Thyroid gland (tissue), 4 donors: ENCODE measurements at regions of chr18 and their contacts with region 1.

Region 1: DNA sequence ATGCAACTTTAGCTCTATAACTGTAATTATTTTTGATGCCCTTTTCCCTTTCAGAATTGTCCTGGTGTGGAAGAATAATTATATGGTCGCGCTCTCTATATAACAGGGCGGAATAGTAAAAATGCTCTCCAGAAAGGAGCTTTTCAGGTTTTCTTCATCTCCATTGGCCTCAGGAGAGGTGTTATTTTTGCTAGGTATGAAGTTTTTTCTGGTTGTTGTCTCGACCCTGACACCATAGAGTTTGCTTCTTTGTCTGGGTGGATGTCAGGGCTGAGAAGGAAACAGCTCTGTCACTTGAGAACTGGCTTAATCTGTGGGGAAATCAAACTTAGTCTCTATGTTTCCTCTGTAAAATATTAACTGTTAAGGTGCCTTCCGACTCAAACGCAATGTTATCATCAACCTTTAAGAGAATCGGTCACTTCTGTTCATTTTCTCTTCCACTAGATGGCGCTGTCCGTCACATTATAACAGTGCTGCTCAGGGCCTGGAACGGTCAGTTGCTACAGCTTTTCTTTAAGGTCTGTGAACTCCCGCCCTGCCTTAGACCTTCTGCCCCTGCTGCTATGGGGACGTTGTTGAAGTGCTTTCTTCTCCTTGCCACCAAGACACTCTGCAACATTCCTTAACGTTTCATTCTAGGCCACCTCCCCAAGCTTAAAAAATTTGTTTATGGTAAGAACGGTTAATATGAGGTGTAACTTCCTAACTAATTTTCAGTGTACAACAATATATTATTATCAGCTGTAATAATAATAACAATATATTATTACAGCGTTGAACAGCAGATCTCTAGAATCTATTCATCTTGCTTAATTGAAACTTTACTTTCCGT is 23.8 kb upstream of the SERPINB12 start:
- DNase-seq: peak; percentile 49 to 57
- H3K4me3 ChIP-seq: no peak overlapping the region
- H3K27ac ChIP-seq: no peak overlapping the region
- H3K4me1 ChIP-seq: no peaks in the 10 kb centered on the region
- H3K27me3 ChIP-seq: no peaks in the 10 kb centered on the region
- CTCF ChIP-seq: peak; percentile 43 to 77 (median 67)
- POLR2A ChIP-seq: no peak

Region 2: GRCh38 chr18:63848159-63848558 is 329.8 kb after region 1 on chr18:
- intact Hi-C with region 1: loop called (anchors 5 kb)
- DNase-seq: no peak
- H3K4me3 ChIP-seq: no peak overlapping the region
- H3K27ac ChIP-seq: no peak overlapping the region
- H3K4me1 ChIP-seq: no peaks in the 10 kb centered on the region
- H3K27me3 ChIP-seq: no peaks in the 10 kb centered on the region
- CTCF ChIP-seq: peak in 3 of 6 experiments; percentile 28 to 41 (median 34)
- POLR2A ChIP-seq: no peak